Ascending aorta (tissue), 2 donors: ENCODE measurements at regions of chr5 and their contacts with region 1.

Region 1: DNA sequence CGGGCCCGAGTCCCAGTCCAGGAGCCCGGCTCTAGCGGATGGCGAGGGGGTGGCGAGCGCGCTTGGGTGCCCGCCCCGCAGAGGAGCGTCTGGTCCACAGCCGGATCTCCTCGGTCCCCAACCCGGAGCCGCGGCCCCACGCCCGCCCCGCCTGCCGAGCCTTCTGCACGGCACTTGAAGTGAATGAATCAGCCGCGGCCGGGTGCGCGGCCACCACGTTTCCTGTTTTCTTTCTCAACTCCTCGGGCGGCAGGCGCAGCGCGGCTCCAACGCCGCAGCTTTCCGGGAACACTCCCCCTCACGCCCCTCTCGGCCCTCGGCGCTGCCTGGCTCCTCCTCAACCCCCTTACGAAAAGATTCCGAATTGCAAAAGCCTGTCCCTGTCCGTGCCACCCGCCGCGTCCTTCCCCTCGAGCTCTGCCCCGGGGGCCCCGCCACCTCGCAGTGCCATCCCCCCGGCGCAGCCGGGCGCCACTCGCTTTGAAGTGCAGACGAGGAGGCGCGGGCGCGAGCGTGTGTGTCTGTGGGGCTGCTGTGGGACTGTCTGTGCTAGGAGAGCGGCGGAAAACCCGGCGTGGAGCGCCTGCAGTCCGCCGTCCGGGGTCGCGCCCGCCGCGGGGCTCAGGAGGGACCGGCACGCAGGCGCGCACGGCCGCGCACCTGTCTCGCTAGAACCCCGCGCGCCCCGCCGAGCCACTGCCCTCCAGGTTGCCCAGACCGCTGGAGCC is 456.6 kb downstream of the RAB3C start:
- DNase-seq: peak; percentile 40 to 93
- H3K4me3 ChIP-seq: peak overlapping the region; percentile 78 to 80
- H3K27ac ChIP-seq: peak overlapping the region; percentile 51 to 82
- H3K4me1 ChIP-seq: peaks cover 0 to 22% of the 10 kb centered on the region in 2 donors
- H3K27me3 ChIP-seq: no peaks in the 10 kb centered on the region
- CTCF ChIP-seq: no peak

Region 2: DNA sequence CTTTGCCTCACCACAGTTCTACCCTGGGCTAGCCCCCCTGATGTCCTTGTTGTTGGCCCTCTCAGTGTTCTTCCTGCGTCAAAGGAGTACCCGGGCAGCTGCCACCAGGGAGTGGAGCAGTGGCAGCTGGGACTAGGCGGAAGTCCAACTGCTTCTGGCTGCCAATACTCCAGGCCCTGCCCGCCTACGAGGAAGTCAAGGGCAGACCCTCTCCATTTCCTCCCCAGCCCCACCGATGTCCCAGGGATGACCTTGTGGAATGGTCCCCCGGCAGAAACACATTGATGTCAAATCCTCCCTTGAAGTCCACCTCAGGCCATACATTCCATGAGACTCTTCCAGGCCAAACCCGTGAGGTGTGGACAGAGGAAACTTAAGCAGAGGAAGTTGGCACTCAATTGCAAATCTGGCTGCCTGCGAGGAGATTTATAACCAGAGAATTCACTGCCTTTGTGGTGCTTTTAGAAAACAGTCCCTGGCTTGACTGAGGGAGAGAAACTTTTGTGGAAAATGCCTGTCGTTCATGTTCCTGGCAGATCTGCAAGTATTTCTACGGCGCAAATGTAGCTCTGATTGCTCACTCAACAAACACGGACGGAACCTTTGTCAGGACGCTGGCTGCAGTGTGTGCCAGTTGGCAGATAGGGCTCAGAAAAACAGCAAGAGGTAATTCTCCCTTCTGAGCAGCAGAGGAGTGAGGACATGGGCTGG is 116.8 kb before region 1 on chr5:
- intact Hi-C with region 1: loop called (anchors 2 kb)
- DNase-seq: peak; percentile 41 to 95
- H3K4me3 ChIP-seq: peak overlapping the region in 1 of 2 donors; percentile 47
- H3K27ac ChIP-seq: peak overlapping the region; percentile 94 to 97
- H3K4me1 ChIP-seq: peaks cover 15 to 59% of the 10 kb centered on the region in 2 donors
- H3K27me3 ChIP-seq: no peaks in the 10 kb centered on the region
- CTCF ChIP-seq: peak in 2 of 3 experiments; percentile 10 to 20

Region 3: DNA sequence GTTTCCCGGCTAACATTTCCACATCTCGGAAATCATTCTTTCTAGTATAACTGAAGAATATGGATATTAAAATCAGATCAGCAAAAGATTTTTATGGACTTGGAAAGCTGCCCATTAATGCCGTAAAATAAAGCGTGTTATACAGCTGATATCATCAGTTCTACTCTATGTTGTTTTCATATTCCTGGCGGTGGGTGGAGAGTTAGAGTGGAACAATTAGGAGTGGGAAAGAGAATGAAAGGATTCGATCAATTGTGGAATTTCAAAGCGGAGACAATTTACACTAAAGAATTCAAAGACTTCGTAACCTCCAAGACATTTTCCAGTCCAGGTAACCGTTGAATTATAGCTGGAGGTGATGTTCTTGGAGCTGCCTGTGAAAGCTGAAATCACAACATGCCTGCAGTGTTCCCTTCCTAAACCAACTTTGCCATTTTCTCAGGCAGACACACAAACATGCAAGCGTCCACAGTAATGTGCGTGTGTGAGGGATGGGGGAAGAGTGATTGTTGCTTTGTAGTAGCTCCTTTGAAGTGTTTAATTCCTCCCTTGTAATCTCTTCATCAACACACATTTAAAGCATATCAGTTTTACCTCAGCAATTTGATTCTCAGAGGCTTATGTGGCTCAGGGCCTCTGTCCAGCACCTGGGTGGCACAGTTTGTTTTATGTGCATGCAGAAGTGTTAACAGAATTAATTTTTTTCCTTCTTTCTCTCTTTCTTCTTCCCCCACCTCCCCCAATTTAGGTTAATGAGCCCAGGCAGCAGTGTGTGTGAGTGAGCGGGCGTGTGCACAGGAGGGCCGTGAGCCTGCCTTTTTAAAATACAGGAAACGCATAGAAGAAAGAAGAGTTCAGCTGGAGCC is 87.5 kb after region 1 on chr5:
- intact Hi-C with region 1: loop called (anchors 1 kb)
- DNase-seq: no peak
- H3K4me3 ChIP-seq: peak overlapping the region; percentile 45 to 60
- H3K27ac ChIP-seq: peak overlapping the region in 1 of 2 donors; percentile 16
- H3K4me1 ChIP-seq: peaks cover 0 to 13% of the 10 kb centered on the region in 2 donors
- H3K27me3 ChIP-seq: no peaks in the 10 kb centered on the region
- CTCF ChIP-seq: no peak

Region 4: DNA sequence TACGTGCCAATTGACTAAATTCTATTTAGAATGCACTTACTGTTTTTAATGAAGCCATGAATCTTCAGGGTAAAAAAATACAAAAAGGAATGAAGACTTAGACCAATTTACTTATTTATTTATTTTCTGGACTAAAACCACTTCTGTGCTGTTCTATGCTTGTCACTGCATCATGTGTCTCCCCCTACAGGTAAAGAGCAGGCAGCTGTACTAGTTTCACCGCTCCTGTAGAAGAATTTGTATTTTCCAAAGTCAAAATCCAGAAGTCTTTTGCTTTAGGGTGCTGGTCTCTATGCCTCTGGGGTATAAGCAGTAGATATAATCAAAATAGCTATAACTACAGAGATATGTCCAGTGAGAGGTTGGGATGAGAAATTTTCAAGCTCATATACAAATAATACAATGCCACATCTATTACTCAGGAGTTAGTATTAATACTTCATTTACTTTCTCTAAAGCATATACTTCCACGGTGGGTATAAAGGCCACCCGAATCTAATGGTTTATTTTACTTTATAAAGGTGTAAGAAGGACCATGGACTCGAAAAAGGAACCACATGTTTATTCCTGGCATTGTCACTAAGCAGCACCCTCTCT is 134.9 kb after region 1 on chr5:
- intact Hi-C with region 1: loop called (anchors 5 kb)
- DNase-seq: no peak
- H3K4me3 ChIP-seq: no peak overlapping the region
- H3K27ac ChIP-seq: no peak overlapping the region
- H3K4me1 ChIP-seq: no peaks in the 10 kb centered on the region
- H3K27me3 ChIP-seq: no peaks in the 10 kb centered on the region
- CTCF ChIP-seq: peak; percentile 59 to 69 (median 68)

Region 5: DNA sequence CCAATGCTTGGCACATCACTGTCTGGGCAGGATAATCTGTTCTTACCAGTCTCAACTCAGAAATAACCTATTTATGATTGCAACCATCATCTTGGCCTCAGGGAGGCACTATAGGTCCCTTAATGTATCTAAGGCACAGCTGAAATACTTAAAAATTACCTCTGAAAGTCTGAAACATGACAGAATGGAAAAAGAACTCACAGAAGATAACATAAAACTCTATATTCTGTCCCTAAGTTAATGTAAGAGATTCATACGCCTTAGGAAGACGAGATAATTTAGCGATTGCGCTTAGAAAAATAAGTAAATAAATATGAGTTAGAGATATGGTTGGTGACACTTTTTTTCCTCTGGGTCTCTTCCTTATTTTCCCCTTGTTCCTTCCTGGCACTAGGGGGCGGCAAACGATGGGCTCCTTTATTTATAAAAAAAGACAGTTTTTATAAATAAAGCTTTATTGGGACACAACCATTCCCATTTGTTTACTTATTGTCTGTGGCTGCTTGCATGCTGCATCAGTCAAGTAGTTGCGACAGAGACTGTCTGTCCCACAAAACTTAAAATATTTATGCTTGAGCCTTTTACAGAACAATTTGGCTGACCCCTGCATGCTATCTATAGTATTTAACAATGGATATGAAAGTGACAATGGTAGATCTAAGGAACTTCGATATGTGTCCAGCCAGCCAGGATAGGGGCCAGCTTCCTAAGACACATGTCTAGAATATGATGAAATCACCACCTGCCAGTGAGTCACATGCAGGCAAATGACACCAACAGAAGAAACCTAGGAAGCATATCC is 774.5 kb after region 1 on chr5:
- intact Hi-C with region 1: no loop called
- DNase-seq: no peak
- H3K4me3 ChIP-seq: no peak overlapping the region
- H3K27ac ChIP-seq: no peak overlapping the region
- H3K4me1 ChIP-seq: peaks cover 0 to 3% of the 10 kb centered on the region in 2 donors
- H3K27me3 ChIP-seq: no peaks in the 10 kb centered on the region
- CTCF ChIP-seq: peak; percentile 51 to 57 (median 52)